ENCODE measurements at regions of chr1 and their contacts with region 1.

Region 1: GRCh38 chr1:46219551-46220523 is 16.7 kb downstream of the LURAP1 start:
- DNase-seq: peak; percentile 19

Region 2: GRCh38 chr1:45974541-45975269 is 245.1 kb before region 1 on chr1:
- in situ Hi-C with region 1: no loop called
- DNase-seq: no peak

Region 3: GRCh38 chr1:46036894-46037839 is 182.7 kb before region 1 on chr1:
- in situ Hi-C with region 1: loop called (anchors 10 kb)
- DNase-seq: peak; percentile 92

Region 4: DNA sequence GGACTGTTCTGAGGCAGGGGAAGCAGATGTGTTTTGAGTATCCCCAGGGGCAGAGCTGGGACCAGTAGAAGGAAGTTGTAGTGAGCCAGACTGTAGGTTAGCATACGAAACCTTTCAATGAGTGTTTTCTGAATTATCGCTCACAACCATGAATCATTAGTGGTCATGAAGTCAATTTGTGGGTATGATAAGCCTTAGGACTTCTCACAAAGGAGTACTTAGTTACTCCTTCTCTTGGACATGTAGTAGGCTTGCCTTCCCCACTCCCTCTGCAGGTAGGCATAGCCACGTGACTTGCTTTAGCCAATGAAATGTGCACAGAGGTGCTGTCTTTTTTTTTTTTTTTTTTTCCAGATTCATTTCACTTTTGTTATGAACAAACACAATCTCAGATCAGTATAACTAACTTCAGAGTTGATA is 150.4 kb after region 1 on chr1:
- in situ Hi-C with region 1: no loop called
- DNase-seq: no peak

Region 5: GRCh38 chr1:46767649-46768282 is 547.9 kb after region 1 on chr1:
- in situ Hi-C with region 1: no loop called
- DNase-seq: no peak